ENCODE measurements at regions of chr12 and their contacts with region 1.

Region 1: GRCh38 chr12:130752692-130753230 is 36.7 kb upstream of the RIMBP2 start:
- DNase-seq: no peak
- H3K4me3 ChIP-seq: no peak overlapping the region
- H3K27ac ChIP-seq: no peak overlapping the region
- H3K4me1 ChIP-seq: no peaks in the 10 kb centered on the region
- H3K27me3 ChIP-seq: no peaks in the 10 kb centered on the region
- CTCF ChIP-seq: no peak
- POLR2A ChIP-seq: no peak

Region 2: GRCh38 chr12:130041983-130042812 is 710.6 kb before region 1 on chr12:
- intact Hi-C with region 1: loop called in 1 of 2 experiments (anchors 10 kb)
- DNase-seq: peak in 6 of 7 donors; percentile 38 to 67 (median 50)
- H3K4me3 ChIP-seq: no peak overlapping the region
- H3K27ac ChIP-seq: no peak overlapping the region
- H3K4me1 ChIP-seq: no peaks in the 10 kb centered on the region
- H3K27me3 ChIP-seq: peaks cover 31% of the 10 kb centered on the region
- CTCF ChIP-seq: peak; percentile 48 to 89 (median 68)
- POLR2A ChIP-seq: no peak

Region 3: DNA sequence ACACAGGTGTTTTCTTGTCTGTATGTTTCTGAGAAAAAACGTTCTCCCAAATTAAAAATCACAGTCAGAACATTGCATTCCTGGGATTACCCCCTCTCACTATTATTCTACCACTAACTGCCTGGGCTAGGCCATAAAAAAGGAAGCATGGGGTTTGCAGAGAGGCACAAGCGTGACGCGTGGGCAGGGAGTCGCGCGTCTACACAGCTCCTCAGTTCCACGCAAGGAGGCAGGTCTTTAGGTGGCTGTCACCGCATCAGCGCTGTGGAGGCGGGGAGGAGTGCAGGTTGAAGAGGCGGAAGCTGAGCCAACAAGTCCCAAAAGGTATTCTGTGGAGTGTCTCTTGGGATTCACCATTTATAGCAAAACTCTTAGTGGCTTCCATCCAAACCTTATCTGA is 146.5 kb before region 1 on chr12:
- intact Hi-C with region 1: no loop called
- DNase-seq: peak in 1 of 7 donors; percentile 33
- H3K4me3 ChIP-seq: no peak overlapping the region
- H3K27ac ChIP-seq: no peak overlapping the region
- H3K4me1 ChIP-seq: no peaks in the 10 kb centered on the region
- H3K27me3 ChIP-seq: no peaks in the 10 kb centered on the region
- CTCF ChIP-seq: no peak
- POLR2A ChIP-seq: no peak

Region 4: DNA sequence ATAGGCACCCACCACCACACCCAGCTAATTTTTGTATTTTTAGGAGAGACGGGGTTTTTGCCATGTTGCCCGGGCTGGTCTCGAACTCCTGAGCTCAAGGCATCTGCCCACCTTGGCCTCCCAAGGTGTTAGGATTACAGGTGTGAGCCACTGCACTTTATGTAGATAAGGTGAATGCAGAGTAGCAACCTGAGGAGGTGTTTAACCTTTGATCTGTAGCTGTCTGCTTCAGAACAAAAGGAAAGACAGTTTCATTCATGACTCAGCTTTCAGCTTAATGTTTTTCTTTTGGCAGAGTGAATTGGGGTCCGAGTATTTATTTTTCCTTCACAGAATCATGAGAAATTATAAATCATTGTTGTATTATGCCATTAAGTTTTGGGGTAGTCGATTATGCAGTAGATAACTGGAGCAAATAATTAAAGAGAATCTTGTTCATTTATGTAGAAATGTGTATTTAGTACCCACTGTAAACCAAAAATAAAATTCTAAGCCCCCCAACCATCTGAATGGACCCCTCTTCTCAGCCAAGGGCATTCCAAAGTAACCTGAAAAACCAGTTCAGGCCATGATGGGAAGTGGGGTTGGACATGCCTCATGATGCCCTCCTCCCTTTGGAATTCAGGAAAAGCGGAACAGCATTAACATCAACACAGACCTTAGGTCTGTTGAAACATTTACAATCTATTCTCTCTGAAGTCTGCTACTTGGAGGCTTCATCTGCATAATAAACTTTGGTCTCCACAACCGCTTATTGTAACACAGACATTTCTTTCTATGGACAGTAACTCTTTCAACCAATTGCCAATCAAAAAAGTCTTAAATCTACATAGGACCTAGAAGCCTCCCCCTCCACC is 97.0 kb after region 1 on chr12:
- intact Hi-C with region 1: no loop called
- DNase-seq: no peak
- H3K4me3 ChIP-seq: no peak overlapping the region
- H3K27ac ChIP-seq: no peak overlapping the region
- H3K4me1 ChIP-seq: peaks cover 0 to 6% of the 10 kb centered on the region in 2 donors
- H3K27me3 ChIP-seq: no peaks in the 10 kb centered on the region
- CTCF ChIP-seq: no peak
- POLR2A ChIP-seq: no peak